ENCODE measurements at regions of chr5 and their contacts with region 1.

Region 1: GRCh38 chr5:160021831-160022446 is 13.0 kb downstream of the TTC1 start:
- DNase-seq: no peak
- H3K4me3 ChIP-seq: no peak overlapping the region
- H3K27ac ChIP-seq: no peak overlapping the region
- H3K4me1 ChIP-seq: peaks cover 32% of the 10 kb centered on the region
- H3K27me3 ChIP-seq: no peaks in the 10 kb centered on the region
- CTCF ChIP-seq: peak; percentile 88

Region 2: GRCh38 chr5:160342403-160342941 is 320.5 kb after region 1 on chr5:
- intact Hi-C with region 1: loop called (anchors 10 kb)
- DNase-seq: no peak
- H3K4me3 ChIP-seq: no peak overlapping the region
- H3K27ac ChIP-seq: no peak overlapping the region
- H3K4me1 ChIP-seq: peaks cover 14% of the 10 kb centered on the region
- H3K27me3 ChIP-seq: no peaks in the 10 kb centered on the region
- CTCF ChIP-seq: no peak

Region 3: GRCh38 chr5:160399402-160400353 is 377.7 kb after region 1 on chr5 and contains the start of gene FAM200C:
- intact Hi-C with region 1: loop called (anchors 10 kb)
- DNase-seq: peak; percentile 90
- H3K4me3 ChIP-seq: peak within 1 kb of the TSS; percentile 73
- H3K27ac ChIP-seq: peak within 1 kb of the TSS; percentile 90
- H3K4me1 ChIP-seq: peaks cover 42% of the 10 kb centered on the region
- H3K27me3 ChIP-seq: no peaks in the 10 kb centered on the region
- CTCF ChIP-seq: no peak
- total RNA-seq, gene FAM200C: 4.9 TPM

Measured in left ventricle myocardium inferior (tissue), 1 donor.